Mammary epithelial cell (primary cell): ENCODE measurements at regions of chr5 and their contacts with region 1.

Region 1: DNA sequence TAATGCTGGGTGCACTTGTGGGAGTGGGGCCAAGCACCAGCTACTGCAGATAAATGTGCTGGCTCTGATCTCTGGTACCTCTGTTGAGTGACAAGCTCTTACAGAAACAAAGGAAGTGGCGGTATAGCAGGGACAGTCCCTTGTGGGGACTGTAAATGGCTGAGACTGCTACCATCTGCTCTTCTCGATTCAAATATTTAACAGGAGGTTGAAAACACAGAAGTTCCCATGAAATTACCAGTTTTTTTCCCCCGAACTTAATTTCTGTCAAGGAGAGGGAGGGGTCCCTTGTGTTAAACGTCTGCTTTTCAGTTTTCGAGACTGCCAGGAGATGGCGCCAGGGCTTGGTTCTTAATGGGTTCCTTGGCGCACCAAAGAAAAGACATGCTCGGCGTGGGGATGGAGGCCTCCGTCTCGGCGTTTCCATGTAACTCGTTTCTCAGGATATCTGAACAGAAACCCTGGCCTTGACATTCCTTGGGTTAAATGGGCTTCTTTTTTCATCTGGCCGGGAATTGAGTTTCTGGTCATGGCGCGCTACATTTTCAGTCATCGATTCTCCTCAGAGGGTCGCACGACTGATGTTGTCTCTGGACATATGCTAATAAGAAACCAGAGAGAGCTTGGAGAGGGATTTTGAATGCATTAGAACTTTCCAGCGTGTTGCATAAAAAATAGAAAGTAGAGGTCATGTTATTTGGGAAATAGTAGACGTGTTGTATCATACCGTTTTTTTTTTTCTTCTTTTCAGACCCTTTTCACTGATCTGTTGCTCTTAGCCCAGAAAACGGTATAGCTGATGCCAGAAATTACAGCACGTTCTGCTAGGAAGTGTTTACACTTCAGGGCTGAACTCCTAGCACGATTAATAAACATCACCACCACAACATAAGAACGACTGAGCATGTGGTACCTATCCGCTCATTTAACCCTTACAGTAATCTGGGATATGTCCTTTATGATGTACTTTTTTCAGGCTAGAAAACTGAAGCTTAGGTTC is 64.0 kb downstream of the CARTPT start:
- DNase-seq: peak; percentile 47
- H3K4me3 ChIP-seq: no peak overlapping the region
- H3K27ac ChIP-seq: no peak overlapping the region
- H3K4me1 ChIP-seq: peaks cover 10% of the 10 kb centered on the region
- H3K27me3 ChIP-seq: no peaks in the 10 kb centered on the region
- CTCF ChIP-seq: peak; percentile 69 to 88

Region 2: DNA sequence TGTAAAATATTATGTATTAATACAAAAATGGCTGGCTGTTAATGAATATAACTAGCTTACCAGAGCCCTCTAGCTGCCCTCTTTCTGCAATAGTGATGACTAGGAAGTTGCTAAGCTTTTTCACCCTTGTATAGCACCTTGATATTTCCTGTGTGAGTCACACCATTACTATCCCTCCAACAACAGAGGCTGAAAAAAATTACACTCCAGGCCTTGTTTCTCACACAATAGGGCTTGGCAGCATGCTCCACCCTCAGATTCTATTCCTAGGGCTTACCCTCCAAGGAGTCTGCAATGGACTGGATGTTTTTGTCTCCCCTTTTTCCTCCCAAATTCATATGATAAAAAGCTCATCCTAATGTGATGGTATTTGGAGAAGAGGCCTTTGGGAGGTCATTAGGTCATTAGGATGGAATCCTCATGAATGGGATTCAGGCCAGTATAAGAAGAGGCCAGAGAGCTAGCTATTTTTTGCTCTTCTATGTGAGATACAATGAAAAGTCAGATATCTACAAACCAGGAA is 139.6 kb after region 1 on chr5:
- CTCF ChIA-PET with region 1: no interaction called
- dilution Hi-C with region 1: no loop called
- in situ Hi-C with region 1: no loop called
- intact Hi-C with region 1: loop called (anchors 1 kb)
- DNase-seq: peak; percentile 92
- H3K4me3 ChIP-seq: no peak overlapping the region
- H3K27ac ChIP-seq: peak overlapping the region; percentile 68
- H3K4me1 ChIP-seq: peaks cover 22% of the 10 kb centered on the region
- H3K27me3 ChIP-seq: no peaks in the 10 kb centered on the region
- CTCF ChIP-seq: peak; percentile 8 to 39

Region 3: DNA sequence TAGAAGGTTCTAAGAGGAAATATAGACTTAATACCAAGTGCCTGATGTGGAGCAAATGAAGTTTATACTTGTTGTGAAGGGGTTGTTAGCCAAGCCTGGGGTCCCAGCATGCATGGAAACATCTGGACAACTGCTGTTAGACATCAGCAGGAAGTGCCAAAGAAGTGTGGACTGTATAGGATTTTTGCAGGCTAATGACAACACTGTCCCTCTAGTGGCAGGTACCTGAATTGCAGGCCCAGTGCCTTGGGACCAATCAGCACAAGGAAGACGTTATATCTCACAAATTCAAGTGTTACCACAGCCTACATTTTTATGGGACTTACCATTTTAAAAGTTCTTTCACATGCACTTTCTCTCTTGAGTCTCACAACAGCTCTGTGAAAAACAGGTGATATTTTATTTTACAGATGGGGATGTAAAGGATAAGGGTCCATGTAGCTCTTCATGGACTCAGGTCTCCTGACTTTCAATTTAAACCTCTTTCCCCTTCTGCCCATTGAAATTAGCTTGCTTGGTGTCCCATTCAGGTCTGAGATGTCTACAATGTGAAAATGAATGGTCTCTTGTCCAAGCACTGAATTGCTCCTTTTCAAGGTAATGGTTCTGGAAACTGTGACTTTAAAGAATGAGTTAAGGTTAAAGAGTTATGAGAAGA is 235.2 kb after region 1 on chr5:
- CTCF ChIA-PET with region 1: no interaction called
- dilution Hi-C with region 1: loop called (anchors 25 kb)
- in situ Hi-C with region 1: loop called in 1 of 2 experiments (anchors 10 kb)
- intact Hi-C with region 1: loop called (anchors 1 kb)
- DNase-seq: peak; percentile 40
- H3K4me3 ChIP-seq: no peak overlapping the region
- H3K27ac ChIP-seq: no peak overlapping the region
- H3K4me1 ChIP-seq: peaks cover 4% of the 10 kb centered on the region
- H3K27me3 ChIP-seq: no peaks in the 10 kb centered on the region
- CTCF ChIP-seq: peak; percentile 90 to 100

Region 4: DNA sequence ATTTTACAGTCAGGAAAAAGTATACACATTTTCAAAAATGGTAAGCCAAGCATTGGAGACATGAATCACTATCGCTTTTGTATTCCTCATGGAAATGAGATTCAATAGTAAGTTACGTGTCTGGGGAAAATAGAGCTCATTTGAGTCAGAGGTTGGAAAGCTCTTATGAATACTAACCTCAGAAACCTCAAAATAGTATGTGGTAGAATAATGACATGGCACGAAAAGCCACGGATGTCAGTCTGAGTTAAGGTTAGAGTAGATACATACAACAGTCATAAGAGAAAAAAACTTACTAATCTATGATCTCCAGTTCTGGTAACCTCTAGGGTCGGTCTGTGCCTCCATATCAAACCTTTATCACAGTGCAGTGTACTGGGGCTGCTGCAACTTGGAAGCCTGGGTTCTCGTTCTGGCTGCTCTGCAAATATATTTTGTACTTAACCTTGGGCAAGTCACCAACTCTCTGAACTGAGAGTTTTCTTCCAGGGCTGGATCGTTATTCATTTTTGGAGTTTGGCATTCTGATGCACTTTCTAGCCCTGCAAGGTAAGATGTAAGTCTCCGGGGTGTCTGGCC is 356.0 kb after region 1 on chr5:
- CTCF ChIA-PET with region 1: no interaction called
- dilution Hi-C with region 1: no loop called
- in situ Hi-C with region 1: no loop called
- intact Hi-C with region 1: loop called (anchors 10 kb)
- DNase-seq: peak; percentile 92
- H3K4me3 ChIP-seq: no peak overlapping the region
- H3K27ac ChIP-seq: no peak overlapping the region
- H3K4me1 ChIP-seq: peaks cover 36% of the 10 kb centered on the region
- H3K27me3 ChIP-seq: peaks cover 10% of the 10 kb centered on the region
- CTCF ChIP-seq: no peak

Region 5: GRCh38 chr5:72205431-72206009 is 422.4 kb after region 1 on chr5:
- CTCF ChIA-PET with region 1: no interaction called
- dilution Hi-C with region 1: no loop called
- in situ Hi-C with region 1: no loop called
- intact Hi-C with region 1: no loop called
- DNase-seq: no peak
- H3K4me3 ChIP-seq: no peak overlapping the region
- H3K27ac ChIP-seq: no peak overlapping the region
- H3K4me1 ChIP-seq: peaks cover 9% of the 10 kb centered on the region
- H3K27me3 ChIP-seq: no peaks in the 10 kb centered on the region
- CTCF ChIP-seq: no peak

Region 6: DNA sequence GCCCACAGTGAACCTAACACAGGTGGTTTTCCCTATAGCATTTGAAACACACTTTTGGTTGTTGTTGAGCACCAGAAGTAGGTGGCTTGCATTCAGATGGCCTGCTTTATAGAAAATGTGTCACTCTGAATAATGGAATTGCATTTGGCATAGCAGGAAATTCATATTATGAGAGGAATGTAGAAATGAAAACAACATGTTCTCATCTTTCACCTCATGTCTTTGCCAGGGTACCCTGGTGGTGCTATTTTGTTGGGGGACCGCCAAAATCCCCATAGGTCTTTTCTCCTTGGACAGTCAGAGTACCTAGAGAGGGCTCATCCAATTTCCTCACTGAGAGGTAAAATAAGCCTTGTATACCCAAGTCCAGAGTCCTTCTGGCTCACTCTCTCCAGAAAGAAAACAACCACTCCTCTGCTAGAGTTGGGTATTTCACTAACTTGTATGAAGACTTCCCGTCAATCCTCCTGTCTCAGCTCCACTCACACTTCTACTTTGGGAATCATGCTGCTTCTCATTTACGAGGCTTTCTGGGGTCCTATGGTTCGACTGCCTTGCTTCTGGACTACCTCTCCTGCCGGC is 469.6 kb after region 1 on chr5:
- CTCF ChIA-PET with region 1: no interaction called
- dilution Hi-C with region 1: no loop called
- in situ Hi-C with region 1: no loop called
- intact Hi-C with region 1: no loop called
- DNase-seq: no peak
- H3K4me3 ChIP-seq: no peak overlapping the region
- H3K27ac ChIP-seq: no peak overlapping the region
- H3K4me1 ChIP-seq: peaks cover 11% of the 10 kb centered on the region
- H3K27me3 ChIP-seq: no peaks in the 10 kb centered on the region
- CTCF ChIP-seq: no peak

Region 7: DNA sequence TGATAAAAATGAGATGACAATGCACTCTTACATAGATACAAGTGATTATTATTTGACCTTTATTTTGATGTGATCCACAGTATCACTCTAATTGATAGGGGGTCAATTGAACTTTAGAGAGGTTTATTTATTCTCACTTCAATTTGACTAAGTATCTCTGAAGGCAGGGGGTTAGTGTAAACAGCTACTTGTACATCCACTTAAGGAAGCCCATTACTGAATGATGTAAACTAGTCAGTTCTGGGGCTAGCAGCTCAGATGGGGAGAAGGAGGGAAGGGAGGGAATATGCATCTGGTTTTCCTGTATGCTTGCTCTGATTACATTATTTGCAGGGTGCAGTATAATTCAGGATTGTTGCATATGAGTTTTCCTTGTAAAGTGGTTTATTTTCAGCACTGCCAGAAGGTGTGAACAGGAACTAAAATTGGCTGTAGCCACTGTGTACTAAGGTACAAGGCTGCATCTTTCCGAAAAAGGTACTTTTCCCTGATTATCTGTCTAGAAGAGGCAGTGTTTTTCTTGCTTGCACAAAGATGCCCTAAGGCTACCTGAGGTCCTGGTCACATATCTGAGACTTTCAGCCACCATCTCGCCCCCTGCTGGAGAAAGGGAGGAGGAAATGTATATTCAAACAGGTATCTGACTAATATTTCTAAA is 485.8 kb after region 1 on chr5:
- CTCF ChIA-PET with region 1: no interaction called
- dilution Hi-C with region 1: no loop called
- in situ Hi-C with region 1: no loop called
- intact Hi-C with region 1: loop called (anchors 1 kb)
- DNase-seq: peak; percentile 40
- H3K4me3 ChIP-seq: no peak overlapping the region
- H3K27ac ChIP-seq: no peak overlapping the region
- H3K4me1 ChIP-seq: no peaks in the 10 kb centered on the region
- H3K27me3 ChIP-seq: no peaks in the 10 kb centered on the region
- CTCF ChIP-seq: peak; percentile 76 to 83

Region 8: GRCh38 chr5:72307968-72308852 is 525.1 kb after region 1 on chr5:
- CTCF ChIA-PET with region 1: no interaction called
- dilution Hi-C with region 1: no loop called
- in situ Hi-C with region 1: loop called in 1 of 2 experiments (anchors 10 kb)
- intact Hi-C with region 1: loop called (anchors 1 kb)
- DNase-seq: peak; percentile 97
- H3K4me3 ChIP-seq: peak overlapping the region; percentile 64 to 99 (median 72)
- H3K27ac ChIP-seq: peak overlapping the region; percentile 78
- H3K4me1 ChIP-seq: peaks cover 16% of the 10 kb centered on the region
- H3K27me3 ChIP-seq: no peaks in the 10 kb centered on the region
- CTCF ChIP-seq: peak; percentile 60 to 81

Region 9: DNA sequence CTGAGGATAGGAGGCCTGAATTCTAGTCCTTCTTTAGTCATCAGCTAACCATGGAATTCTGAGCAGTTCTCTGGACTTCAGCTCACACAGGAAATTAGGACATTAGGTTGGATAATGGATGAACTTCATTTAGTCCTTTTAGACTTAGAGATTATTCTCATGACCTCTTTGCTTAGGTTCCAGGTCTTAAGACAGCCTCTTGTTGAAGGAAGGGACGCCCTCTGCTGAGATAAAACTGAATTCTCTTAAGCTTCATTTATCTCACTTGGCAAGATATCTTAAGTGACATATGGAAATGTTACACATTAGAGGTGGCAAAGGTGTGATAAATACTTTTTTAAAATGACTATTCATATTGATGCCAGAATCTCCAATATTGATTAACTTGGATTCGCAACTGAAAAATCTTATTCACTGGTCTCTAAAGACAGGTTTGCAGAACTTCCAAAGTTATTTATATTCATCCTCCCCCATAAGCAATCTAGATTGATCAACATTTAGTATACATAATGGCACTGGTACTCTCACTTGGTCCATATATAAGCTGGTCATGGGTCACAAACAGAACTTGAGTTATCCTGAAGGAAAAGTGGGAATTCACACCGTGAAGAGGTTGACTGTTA is 741.0 kb after region 1 on chr5:
- CTCF ChIA-PET with region 1: no interaction called
- dilution Hi-C with region 1: no loop called
- in situ Hi-C with region 1: no loop called
- intact Hi-C with region 1: loop called (anchors 5 kb)
- DNase-seq: peak; percentile 53
- H3K4me3 ChIP-seq: no peak overlapping the region
- H3K27ac ChIP-seq: no peak overlapping the region
- H3K4me1 ChIP-seq: peaks cover 7% of the 10 kb centered on the region
- H3K27me3 ChIP-seq: no peaks in the 10 kb centered on the region
- CTCF ChIP-seq: peak; percentile 62 to 67